Breast epithelium (tissue), 4 donors: ENCODE measurements at regions of chr18 and their contacts with region 1.

Region 1: DNA sequence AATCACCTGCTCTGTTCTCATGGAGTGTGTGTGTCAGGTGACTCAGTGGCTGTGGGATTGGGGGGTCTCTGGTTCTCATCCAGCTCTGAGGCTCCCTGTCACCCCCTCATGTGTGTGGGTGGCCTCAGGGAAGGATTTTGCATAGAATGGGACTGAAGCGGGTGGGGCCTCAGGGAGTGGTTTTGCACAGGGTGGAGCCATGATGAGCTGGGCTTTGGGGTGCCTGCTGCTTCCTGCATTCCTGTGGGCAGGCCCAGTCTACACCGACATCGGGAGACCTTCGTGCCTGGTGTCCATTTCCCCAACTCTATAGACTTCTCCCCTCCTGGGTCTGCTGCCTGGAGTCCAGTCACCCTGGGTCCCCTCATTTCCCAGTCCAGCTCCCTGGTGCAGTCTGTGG is 59.7 kb downstream of the VAPA start:
- DNase-seq: no peak
- H3K4me3 ChIP-seq: no peak overlapping the region
- H3K27ac ChIP-seq: no peak overlapping the region
- H3K4me1 ChIP-seq: no peaks in the 10 kb centered on the region
- H3K27me3 ChIP-seq: peaks cover 0 to 5% of the 10 kb centered on the region in 2 donors
- CTCF ChIP-seq: no peak
- POLR2A ChIP-seq: no peak

Region 2: DNA sequence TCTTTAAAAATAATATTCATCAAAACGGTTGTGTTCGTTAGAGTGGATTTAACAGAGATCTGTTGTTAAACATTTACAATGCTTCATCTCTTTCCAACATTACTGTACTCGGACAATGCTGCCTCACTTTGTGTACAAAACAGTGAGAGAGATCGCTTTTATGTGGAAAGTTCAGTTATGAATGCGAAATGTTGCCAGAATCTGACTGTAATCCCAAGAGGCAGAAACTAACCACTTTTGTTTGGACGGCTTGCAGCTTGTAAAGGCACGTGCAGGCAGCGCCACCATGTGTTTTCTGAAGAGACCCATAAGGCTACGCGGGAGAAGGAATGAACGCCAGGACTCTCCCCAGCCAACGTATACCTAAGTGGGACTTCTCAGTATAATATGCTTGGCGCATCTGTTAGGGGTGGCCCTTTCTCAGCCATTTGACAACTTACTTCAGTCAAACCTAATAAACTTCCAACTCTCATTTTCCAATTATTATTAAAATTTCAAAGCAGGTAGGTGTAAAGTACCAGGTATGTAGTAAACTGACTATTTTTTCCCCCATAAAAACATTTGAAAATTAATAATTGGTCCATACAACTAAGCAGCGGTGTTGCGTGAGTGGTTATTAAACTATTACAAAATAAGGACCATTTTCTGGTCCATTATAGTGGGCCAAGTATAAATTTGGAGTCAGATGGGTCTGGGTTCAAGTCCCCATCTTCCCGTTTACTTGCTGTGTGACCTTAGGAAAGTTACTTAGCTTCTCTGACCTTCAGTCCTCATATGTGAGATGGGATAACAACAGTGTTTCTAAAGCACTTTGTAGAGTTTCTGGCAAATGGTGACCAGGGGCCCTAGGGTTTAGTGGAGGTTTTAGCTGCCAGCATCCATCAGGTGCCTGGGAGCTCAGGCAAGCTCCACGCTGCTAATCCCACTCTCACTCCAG is 546.8 kb after region 1 on chr18:
- intact Hi-C with region 1: loop called (anchors 2 kb)
- DNase-seq: peak; percentile 79
- H3K4me3 ChIP-seq: peak overlapping the region in 1 of 3 donors; percentile 6
- H3K27ac ChIP-seq: no peak overlapping the region
- H3K4me1 ChIP-seq: peaks cover 0 to 2% of the 10 kb centered on the region in 2 donors
- H3K27me3 ChIP-seq: no peaks in the 10 kb centered on the region
- CTCF ChIP-seq: peak; percentile 29 to 84 (median 77)
- POLR2A ChIP-seq: no peak